ENCODE measurements at regions of chr9 and their contacts with region 1.

Region 1: GRCh38 chr9:125663127-125663526 is 43.9 kb downstream of the MAPKAP1 start:
- DNase-seq: no peak
- ATAC-seq: peak; percentile 36
- H3K4me3 ChIP-seq: no peak overlapping the region
- H3K27ac ChIP-seq: peak overlapping the region; percentile 22; the same call in 1 of the 2 replicates
- H3K4me1 ChIP-seq: peaks cover 21% of the 10 kb centered on the region
- H3K27me3 ChIP-seq: no peaks in the 10 kb centered on the region
- CTCF ChIP-seq: no peak
- EP300 ChIP-seq: no peak
- POLR2A ChIP-seq: no peak
- RAD21 ChIP-seq: no peak

Region 2: GRCh38 chr9:124480621-124480981 is 1182.5 kb before region 1 on chr9:
- CTCF ChIA-PET with region 1: no interaction called
- POLR2A ChIA-PET with region 1: no interaction called
- RAD21 ChIA-PET with region 1: no interaction called
- SMC1A ChIA-PET with region 1: no interaction called
- in situ Hi-C with region 1: no loop called
- intact Hi-C with region 1: no loop called
- DNase-seq: no peak
- ATAC-seq: peak; percentile 93
- H3K4me3 ChIP-seq: no peak overlapping the region
- H3K27ac ChIP-seq: no peak overlapping the region
- H3K4me1 ChIP-seq: no peaks in the 10 kb centered on the region
- H3K27me3 ChIP-seq: peaks cover 2 to 5% of the 10 kb centered on the region in 2 experiments; a peak in 3 of 4 replicates
- CTCF ChIP-seq: peak; percentile 43 to 61 (median 61)
- EP300 ChIP-seq: no peak
- POLR2A ChIP-seq: no peak
- RAD21 ChIP-seq: peak; percentile 27; the same call in 1 of the 2 replicates

Region 3: DNA sequence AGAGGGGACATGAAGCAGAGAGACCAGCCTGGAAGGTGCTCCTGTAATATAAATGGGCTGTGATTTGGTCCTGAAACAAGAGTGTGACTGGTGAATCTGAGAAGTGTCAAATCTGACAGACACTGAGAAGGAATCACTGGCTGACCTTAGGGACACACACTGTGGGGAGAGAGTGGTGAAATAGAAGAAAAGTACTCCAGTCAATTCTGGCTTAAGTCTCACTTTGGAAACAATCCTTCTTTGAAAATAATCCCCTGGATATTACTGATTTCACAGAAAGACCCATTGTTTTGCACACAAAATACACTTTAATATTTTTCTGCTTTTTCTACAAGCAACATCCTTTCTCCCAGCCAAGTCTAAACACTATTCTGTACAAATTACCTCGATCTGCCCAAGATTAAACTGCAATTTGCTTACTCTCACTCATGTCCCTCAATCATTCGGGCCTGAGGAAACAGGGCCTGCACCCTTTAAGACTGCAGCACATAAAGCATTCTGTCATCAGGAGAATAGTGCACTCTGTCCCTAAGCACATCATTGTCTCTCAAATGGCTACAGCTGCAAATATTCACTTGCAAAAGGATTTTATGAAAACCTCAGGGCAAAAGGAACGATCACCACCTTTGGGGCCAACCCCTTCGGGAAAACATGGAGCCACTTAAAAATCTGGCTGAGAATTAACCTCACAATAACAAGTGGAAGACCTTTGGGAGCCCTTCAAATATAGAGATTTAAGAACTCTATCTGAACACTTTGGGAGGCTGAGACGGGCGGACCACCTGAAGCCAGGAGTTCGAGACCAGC is 24.7 kb before region 1 on chr9:
- CTCF ChIA-PET with region 1: interaction called, 3 read pairs
- POLR2A ChIA-PET with region 1: interaction called, 5 read pairs
- RAD21 ChIA-PET with region 1: interaction called, 5 read pairs
- SMC1A ChIA-PET with region 1: interaction called, 19 read pairs
- in situ Hi-C with region 1: no loop called
- intact Hi-C with region 1: loop called (anchors 1 kb)
- DNase-seq: no peak
- ATAC-seq: no peak
- H3K4me3 ChIP-seq: no peak overlapping the region
- H3K27ac ChIP-seq: peak overlapping the region; percentile 73
- H3K4me1 ChIP-seq: peaks cover 82% of the 10 kb centered on the region
- H3K27me3 ChIP-seq: no peaks in the 10 kb centered on the region
- CTCF ChIP-seq: no peak
- EP300 ChIP-seq: no peak
- POLR2A ChIP-seq: no peak
- RAD21 ChIP-seq: no peak

Region 4: DNA sequence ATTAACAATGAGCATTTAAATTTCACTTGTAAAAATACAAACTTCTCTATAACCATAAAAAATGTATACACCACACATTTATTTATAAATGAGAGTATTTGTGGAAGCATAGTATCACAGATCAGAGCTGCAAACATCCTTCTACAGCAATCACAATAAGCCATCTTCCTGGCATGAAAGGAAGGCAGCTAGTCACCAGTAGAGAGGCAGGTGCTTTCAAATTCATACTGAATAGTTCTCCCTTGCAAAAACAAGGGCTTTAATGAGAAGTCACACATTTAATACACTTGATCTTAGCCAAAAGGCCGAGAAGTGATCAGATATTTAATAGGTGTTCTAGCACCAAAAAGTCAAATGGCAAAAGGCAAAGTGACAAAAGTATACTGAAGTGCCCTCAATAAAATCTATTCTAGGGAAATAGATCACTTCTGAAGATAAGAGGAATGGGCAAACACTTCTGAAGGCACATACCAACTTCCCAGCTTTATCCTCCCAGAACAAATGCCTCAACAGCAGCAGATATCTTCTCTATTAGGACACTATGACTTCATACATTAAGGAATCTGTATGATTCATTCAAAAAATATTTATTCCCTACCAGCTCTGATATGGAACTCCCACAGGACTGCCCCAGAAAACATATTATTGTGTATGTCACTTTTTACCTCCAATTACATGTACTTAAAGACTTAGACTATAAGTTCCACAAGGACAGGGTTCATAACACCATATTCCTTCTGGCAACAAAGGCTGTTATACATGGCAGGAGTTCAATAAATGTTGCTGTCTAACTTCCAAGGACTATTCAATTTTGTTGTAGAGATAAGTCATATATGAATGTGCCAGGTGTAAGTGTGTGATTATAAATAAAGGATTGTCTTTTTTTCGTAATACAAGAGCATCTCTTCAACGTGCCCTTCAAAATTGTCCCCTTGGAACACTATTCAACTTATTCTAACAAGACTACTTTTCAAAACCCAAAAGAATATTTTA is 12.2 kb after region 1 on chr9:
- CTCF ChIA-PET with region 1: interaction called, 9 read pairs
- POLR2A ChIA-PET with region 1: interaction called, 5 read pairs
- RAD21 ChIA-PET with region 1: interaction called, 4 read pairs
- SMC1A ChIA-PET with region 1: interaction called, 21 read pairs
- in situ Hi-C with region 1: no loop called
- intact Hi-C with region 1: no loop called
- DNase-seq: no peak
- ATAC-seq: no peak
- H3K4me3 ChIP-seq: no peak overlapping the region
- H3K27ac ChIP-seq: no peak overlapping the region
- H3K4me1 ChIP-seq: peaks cover 4% of the 10 kb centered on the region; the same call in 1 of the 2 replicates
- H3K27me3 ChIP-seq: no peaks in the 10 kb centered on the region
- CTCF ChIP-seq: no peak
- EP300 ChIP-seq: no peak
- POLR2A ChIP-seq: no peak
- RAD21 ChIP-seq: no peak

Region 5: DNA sequence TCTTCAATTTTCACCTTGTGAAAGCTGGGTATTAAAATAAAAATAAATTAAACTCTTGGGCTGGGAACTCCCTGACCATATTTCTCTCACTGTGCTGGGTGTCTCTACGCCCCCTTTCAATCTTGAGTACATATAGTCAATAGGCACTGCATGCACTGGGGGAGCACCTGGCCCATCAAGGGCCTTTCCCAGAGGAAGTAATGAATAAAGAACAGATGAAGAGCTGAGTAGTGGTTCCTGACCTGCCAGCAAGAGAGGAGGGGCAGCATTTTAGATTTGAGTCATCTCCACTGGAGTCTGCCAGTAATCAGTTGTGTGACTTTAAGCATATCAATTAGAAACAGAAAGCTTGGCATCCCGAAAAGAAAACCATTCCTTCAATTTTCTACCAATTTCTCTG is 37.7 kb after region 1 on chr9:
- CTCF ChIA-PET with region 1: no interaction called
- POLR2A ChIA-PET with region 1: interaction called, 8 read pairs
- RAD21 ChIA-PET with region 1: interaction called, 10 read pairs
- SMC1A ChIA-PET with region 1: interaction called, 13 read pairs
- in situ Hi-C with region 1: no loop called
- intact Hi-C with region 1: no loop called
- DNase-seq: peak; percentile 84
- ATAC-seq: peak; percentile 89
- H3K4me3 ChIP-seq: peak overlapping the region; percentile 46; the same call in 1 of the 2 replicates
- H3K27ac ChIP-seq: peak overlapping the region; percentile 68
- H3K4me1 ChIP-seq: peaks cover 22% of the 10 kb centered on the region
- H3K27me3 ChIP-seq: no peaks in the 10 kb centered on the region
- CTCF ChIP-seq: no peak
- EP300 ChIP-seq: peak; percentile 81 to 82; a peak in 2 of 4 replicates
- POLR2A ChIP-seq: no peak
- RAD21 ChIP-seq: no peak; the same call in 1 of the 2 replicates

Region 6: GRCh38 chr9:125706661-125707471 is 43.7 kb after region 1 on chr9 and contains the start of gene MAPKAP1:
- CTCF ChIA-PET with region 1: no interaction called
- POLR2A ChIA-PET with region 1: interaction called, 8 read pairs
- RAD21 ChIA-PET with region 1: interaction called, 10 read pairs
- SMC1A ChIA-PET with region 1: interaction called, 13 read pairs
- in situ Hi-C with region 1: no loop called
- intact Hi-C with region 1: no loop called
- DNase-seq: peak; percentile 81
- ATAC-seq: peak; percentile 94
- H3K4me3 ChIP-seq: peak within 1 kb of the TSS; percentile 90
- H3K27ac ChIP-seq: peak within 1 kb of the TSS; percentile 69
- H3K4me1 ChIP-seq: peaks cover 17% of the 10 kb centered on the region
- H3K27me3 ChIP-seq: no peaks in the 10 kb centered on the region
- CTCF ChIP-seq: no peak
- EP300 ChIP-seq: no peak
- POLR2A ChIP-seq: peak; percentile 95
- RAD21 ChIP-seq: no peak
- polyA plus RNA-seq, gene MAPKAP1: 5.1 to 11.7 TPM

Region 7: DNA sequence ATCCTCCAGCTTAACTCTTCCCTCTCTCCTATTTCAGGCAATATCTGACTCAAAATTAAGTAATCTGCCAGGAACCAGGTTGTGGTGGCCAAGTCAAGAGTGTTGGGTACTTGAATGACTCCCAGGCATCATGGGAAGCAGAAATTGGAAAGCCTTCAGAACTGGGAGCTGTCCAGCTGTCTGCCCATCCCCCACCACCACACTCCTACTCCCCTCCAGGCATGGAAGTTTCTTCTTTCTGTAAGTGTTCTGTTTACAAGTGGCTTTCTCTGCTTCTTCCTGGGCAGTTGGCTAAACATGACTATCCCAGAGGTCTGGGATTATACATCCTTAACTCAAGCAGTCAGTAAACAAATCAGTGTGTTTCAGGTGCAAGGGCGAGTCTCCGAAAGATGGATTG is 69.4 kb after region 1 on chr9:
- CTCF ChIA-PET with region 1: no interaction called
- POLR2A ChIA-PET with region 1: no interaction called
- RAD21 ChIA-PET with region 1: no interaction called
- SMC1A ChIA-PET with region 1: no interaction called
- in situ Hi-C with region 1: no loop called
- intact Hi-C with region 1: no loop called
- DNase-seq: no peak
- ATAC-seq: no peak
- H3K4me3 ChIP-seq: no peak overlapping the region
- H3K27ac ChIP-seq: no peak overlapping the region
- H3K4me1 ChIP-seq: no peaks in the 10 kb centered on the region
- H3K27me3 ChIP-seq: no peaks in the 10 kb centered on the region
- CTCF ChIP-seq: no peak
- EP300 ChIP-seq: no peak
- POLR2A ChIP-seq: no peak
- RAD21 ChIP-seq: no peak

Measured in GM12878 (cell line).